ENCODE measurements at regions of chr3 and their contacts with region 1.

Region 1: GRCh38 chr3:46078712-46079400 is 51.6 kb upstream of the XCR1 start:
- DNase-seq: peak; percentile 82
- H3K4me3 Mint-ChIP-seq: no peak overlapping the region
- H3K27ac Mint-ChIP-seq: no peak overlapping the region
- H3K4me1 Mint-ChIP-seq: peaks cover 74% of the 10 kb centered on the region
- H3K27me3 Mint-ChIP-seq: peaks cover 7% of the 10 kb centered on the region

Region 2: DNA sequence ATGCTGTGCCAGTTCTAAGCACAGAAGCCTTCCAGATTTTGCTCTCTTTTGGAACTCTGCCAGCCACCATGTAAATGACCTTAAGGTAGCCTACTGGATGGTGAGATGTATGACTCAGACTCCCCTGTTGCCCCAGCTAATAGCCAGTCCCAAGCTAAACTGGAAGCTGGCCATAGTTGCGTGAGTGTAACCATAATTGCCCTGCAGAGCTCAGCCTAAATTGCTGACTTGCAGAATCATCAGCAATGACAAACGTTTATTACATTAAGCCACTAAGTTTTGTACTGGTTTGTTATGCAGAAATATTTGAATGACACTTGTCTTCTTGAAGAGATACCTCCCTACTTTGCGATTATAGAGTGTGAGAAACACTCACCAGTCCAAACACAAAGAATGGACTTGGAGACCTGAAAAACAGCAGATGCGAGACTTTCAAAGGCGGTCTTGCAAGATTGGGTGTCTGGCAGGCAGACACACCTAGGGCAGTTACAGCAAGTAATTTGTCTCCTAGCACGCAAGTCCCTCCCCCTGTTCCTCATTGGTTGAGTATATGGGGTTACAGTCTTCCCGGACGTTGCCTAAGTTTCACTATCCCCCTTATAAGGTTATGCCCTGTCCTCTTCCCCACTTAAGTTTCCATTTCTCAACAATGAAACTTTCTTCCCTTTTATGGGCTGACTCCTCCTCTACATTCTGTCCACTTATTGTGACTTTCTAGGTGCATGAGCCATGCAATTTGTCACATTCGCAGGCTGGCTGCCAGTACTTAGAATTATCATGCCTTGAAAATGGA is 32.0 kb after region 1 on chr3:
- intact Hi-C with region 1: no loop called
- DNase-seq: no peak
- H3K4me3 Mint-ChIP-seq: peak overlapping the region; percentile 19
- H3K27ac Mint-ChIP-seq: peak overlapping the region; percentile 57
- H3K4me1 Mint-ChIP-seq: peaks cover 80% of the 10 kb centered on the region
- H3K27me3 Mint-ChIP-seq: no peaks in the 10 kb centered on the region

Region 3: DNA sequence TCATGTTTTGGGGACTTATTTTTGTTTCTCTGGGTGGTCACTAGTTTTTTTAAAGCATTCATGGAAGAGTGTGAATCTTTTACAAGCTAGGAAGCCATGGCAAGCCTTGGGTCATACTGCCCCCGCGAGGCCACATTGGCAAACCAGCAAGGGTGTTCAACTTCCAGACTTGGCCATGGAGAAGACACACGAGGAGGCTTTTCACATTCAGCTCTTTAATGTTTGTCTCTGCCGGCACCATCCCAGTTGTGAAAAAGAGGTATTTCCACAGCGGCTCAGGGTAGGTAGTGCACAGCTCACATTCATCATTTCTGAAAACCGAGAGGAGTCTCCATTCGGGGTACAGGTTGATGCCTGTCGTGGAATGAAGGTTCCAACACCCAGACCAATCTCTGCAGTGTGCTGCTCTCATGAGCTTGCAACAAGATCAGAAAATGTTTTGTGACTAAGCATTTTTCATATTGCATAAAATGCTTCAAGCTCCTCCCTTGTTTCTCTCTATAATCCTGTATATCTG is 299.6 kb after region 1 on chr3:
- intact Hi-C with region 1: loop called (anchors 1 kb)
- DNase-seq: peak; percentile 55
- H3K4me3 Mint-ChIP-seq: no peak overlapping the region
- H3K27ac Mint-ChIP-seq: no peak overlapping the region
- H3K4me1 Mint-ChIP-seq: peaks cover 56% of the 10 kb centered on the region
- H3K27me3 Mint-ChIP-seq: peaks cover 8% of the 10 kb centered on the region